CD4-positive, alpha-beta T cell (primary cell): ENCODE measurements at regions of chr6 and their contacts with region 1.

Region 1: DNA sequence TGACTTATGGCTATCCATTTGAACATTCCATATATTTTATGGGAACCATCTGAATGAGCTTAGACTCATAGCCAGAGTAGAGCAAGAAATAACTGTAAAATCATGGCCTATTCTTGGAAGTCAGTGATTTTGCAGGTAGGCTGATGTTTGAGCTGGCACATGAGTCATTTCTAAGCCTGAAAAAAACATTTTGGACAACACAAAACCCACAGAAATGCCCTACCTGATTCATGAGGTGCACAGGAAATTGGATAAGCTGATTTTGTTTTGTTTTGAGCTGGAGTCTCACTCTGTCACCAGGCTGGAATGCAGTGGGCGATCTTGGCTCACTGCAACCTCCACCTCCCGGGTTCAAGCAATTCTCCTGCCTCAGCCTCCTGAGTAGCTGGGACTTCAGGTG is 443.0 kb downstream of the PKHD1 start:
- DNase-seq: no peak
- ATAC-seq: no peak
- H3K4me3 ChIP-seq: no peak overlapping the region
- H3K4me3 Mint-ChIP-seq: no peak overlapping the region
- H3K27ac ChIP-seq: no peak overlapping the region
- H3K27ac Mint-ChIP-seq: no peak overlapping the region
- H3K4me1 ChIP-seq: no peaks in the 10 kb centered on the region
- H3K4me1 Mint-ChIP-seq: no peaks in the 10 kb centered on the region
- H3K27me3 ChIP-seq: no peaks in the 10 kb centered on the region
- H3K27me3 Mint-ChIP-seq: no peaks in the 10 kb centered on the region
- CTCF ChIP-seq: no peak

Region 2: GRCh38 chr6:51702851-51703250 is 58.4 kb after region 1 on chr6:
- CTCF ChIA-PET with region 1: no interaction called
- POLR2A ChIA-PET with region 1: no interaction called
- intact Hi-C with region 1: loop called in 1 of 2 experiments (anchors 5 kb)
- DNase-seq: no peak
- ATAC-seq: no peak
- H3K4me3 ChIP-seq: no peak overlapping the region
- H3K4me3 Mint-ChIP-seq: no peak overlapping the region
- H3K27ac ChIP-seq: no peak overlapping the region
- H3K27ac Mint-ChIP-seq: no peak overlapping the region
- H3K4me1 ChIP-seq: no peaks in the 10 kb centered on the region
- H3K4me1 Mint-ChIP-seq: no peaks in the 10 kb centered on the region
- H3K27me3 ChIP-seq: no peaks in the 10 kb centered on the region
- H3K27me3 Mint-ChIP-seq: no peaks in the 10 kb centered on the region
- CTCF ChIP-seq: no peak